ENCODE measurements at regions of chr9 and their contacts with region 1.

Region 1: DNA sequence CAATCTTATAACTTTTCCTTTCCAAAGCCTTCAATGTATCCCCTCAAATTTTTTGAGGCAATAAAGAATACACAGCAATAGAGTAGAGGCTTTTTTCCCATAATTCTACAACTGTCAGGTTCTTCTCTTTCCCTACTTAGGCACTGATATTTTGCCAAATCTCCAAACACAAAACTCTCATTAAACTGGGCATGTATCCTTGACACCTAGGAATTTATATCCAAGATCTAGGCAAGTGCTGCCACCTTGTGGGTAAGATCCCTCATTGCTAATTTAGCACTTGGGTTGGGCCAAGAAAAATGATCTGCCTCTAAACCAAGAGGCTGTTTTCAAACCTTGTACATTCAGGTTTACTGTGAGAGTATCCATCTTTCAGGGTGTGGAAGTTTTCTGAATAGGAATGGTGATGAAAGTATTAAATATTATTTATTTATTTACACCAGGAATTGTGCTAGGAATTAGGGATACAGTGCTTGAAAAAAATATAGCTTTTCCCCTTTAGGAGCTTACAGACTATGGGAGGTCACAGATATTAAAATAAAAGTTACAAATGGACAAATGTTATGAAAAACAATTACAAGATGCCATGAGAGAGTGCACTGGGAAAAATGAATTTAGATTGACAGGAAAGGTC is 17.6 kb downstream of the TSTD2 start:
- DNase-seq: peak in 36 of 42 donors; percentile 37 to 92 (median 76)

Region 2: GRCh38 chr9:97411789-97412625 is 203.5 kb before region 1 on chr9 and contains the start of gene TDRD7:
- intact Hi-C with region 1: loop called (anchors 10 kb)
- DNase-seq: peak; percentile 50 to 94 (median 84)